ENCODE measurements at regions of chr19 and their contacts with region 1.

Region 1: GRCh38 chr19:48588670-48589399 is 17.7 kb upstream of the SPACA4 start:
- DNase-seq: peak; percentile 95 to 98
- ATAC-seq: peak; percentile 91
- H3K4me3 ChIP-seq: no peak overlapping the region
- H3K27ac ChIP-seq: no peak overlapping the region
- H3K4me1 ChIP-seq: no peaks in the 10 kb centered on the region
- H3K27me3 ChIP-seq: no peaks in the 10 kb centered on the region

Region 2: GRCh38 chr19:48255376-48256303 is 333.2 kb before region 1 on chr19 and contains the start of gene CARD8:
- intact Hi-C with region 1: loop called in 1 of 2 experiments (anchors 10 kb)
- DNase-seq: peak; percentile 88 to 92
- ATAC-seq: peak; percentile 95
- H3K4me3 ChIP-seq: peak within 1 kb of the TSS; percentile 78 to 99
- H3K27ac ChIP-seq: peak within 1 kb of the TSS in 1 of 2 donors; percentile 100
- H3K4me1 ChIP-seq: no peaks in the 10 kb centered on the region
- H3K27me3 ChIP-seq: no peaks in the 10 kb centered on the region
- total RNA-seq, gene CARD8: 46.5 to 116 TPM

Region 3: GRCh38 chr19:48310227-48310626 is 278.6 kb before region 1 on chr19:
- intact Hi-C with region 1: loop called in 1 of 2 experiments (anchors 10 kb)
- DNase-seq: peak in 1 of 2 donors; percentile 2
- ATAC-seq: no peak
- H3K4me3 ChIP-seq: no peak overlapping the region
- H3K27ac ChIP-seq: no peak overlapping the region
- H3K4me1 ChIP-seq: no peaks in the 10 kb centered on the region
- H3K27me3 ChIP-seq: no peaks in the 10 kb centered on the region

Region 4: GRCh38 chr19:48391107-48391986 is 197.5 kb before region 1 on chr19 and contains the start of gene KDELR1:
- intact Hi-C with region 1: loop called in 1 of 2 experiments (anchors 1 kb)
- DNase-seq: peak; percentile 85 to 92
- ATAC-seq: peak; percentile 95
- H3K4me3 ChIP-seq: peak within 1 kb of the TSS; percentile 68 to 92
- H3K27ac ChIP-seq: peak within 1 kb of the TSS; percentile 28 to 37
- H3K4me1 ChIP-seq: no peaks in the 10 kb centered on the region
- H3K27me3 ChIP-seq: no peaks in the 10 kb centered on the region
- total RNA-seq, gene KDELR1: 94.0 to 128 TPM

Region 5: GRCh38 chr19:48489608-48490216 is 99.1 kb before region 1 on chr19:
- intact Hi-C with region 1: loop called in 1 of 2 experiments (anchors 2 kb)
- DNase-seq: peak; percentile 82 to 93
- ATAC-seq: no peak
- H3K4me3 ChIP-seq: no peak overlapping the region
- H3K27ac ChIP-seq: no peak overlapping the region
- H3K4me1 ChIP-seq: no peaks in the 10 kb centered on the region
- H3K27me3 ChIP-seq: no peaks in the 10 kb centered on the region

Region 6: GRCh38 chr19:48543121-48544056 is 45.4 kb before region 1 on chr19:
- intact Hi-C with region 1: no loop called
- DNase-seq: no peak
- ATAC-seq: no peak
- H3K4me3 ChIP-seq: no peak overlapping the region
- H3K27ac ChIP-seq: no peak overlapping the region
- H3K4me1 ChIP-seq: no peaks in the 10 kb centered on the region
- H3K27me3 ChIP-seq: no peaks in the 10 kb centered on the region

Region 7: GRCh38 chr19:48618916-48619691 is 30.3 kb after region 1 on chr19 and contains the starts of genes RPL18 and SPHK2:
- intact Hi-C with region 1: no loop called
- DNase-seq: peak; percentile 99
- ATAC-seq: peak; percentile 95
- H3K4me3 ChIP-seq: peak within 1 kb of the TSS; percentile 81 to 87
- H3K27ac ChIP-seq: peak within 1 kb of the TSS; percentile 50 to 92
- H3K4me1 ChIP-seq: no peaks in the 10 kb centered on the region
- H3K27me3 ChIP-seq: no peaks in the 10 kb centered on the region
- total RNA-seq, gene RPL18: 900 to 909 TPM
- total RNA-seq, gene SPHK2: 14.6 to 17.9 TPM

Measured in aorta (tissue), 5 donors.